ENCODE measurements at regions of chr3 and their contacts with region 1.

Region 1: GRCh38 chr3:105729667-105730066 is 139.1 kb downstream of the CBLB start:
- DNase-seq: no peak
- ATAC-seq: no peak
- H3K4me3 ChIP-seq: peak overlapping the region in 1 of 2 donors; percentile 10
- H3K27ac ChIP-seq: no peak overlapping the region
- H3K4me1 ChIP-seq: peaks cover 0 to 4% of the 10 kb centered on the region in 2 donors
- H3K27me3 ChIP-seq: no peaks in the 10 kb centered on the region

Region 2: GRCh38 chr3:105827959-105828358 is 98.3 kb after region 1 on chr3:
- intact Hi-C with region 1: loop called in 1 of 2 experiments (anchors 10 kb)
- DNase-seq: peak in 1 of 2 donors; percentile 55
- ATAC-seq: peak; percentile 71
- H3K4me3 ChIP-seq: no peak overlapping the region
- H3K27ac ChIP-seq: no peak overlapping the region
- H3K4me1 ChIP-seq: peaks cover 4% of the 10 kb centered on the region in 2 donors
- H3K27me3 ChIP-seq: no peaks in the 10 kb centered on the region

Measured in aorta (tissue), 5 donors.